ENCODE measurements at regions of chr2 and their contacts with region 1.

Region 1: DNA sequence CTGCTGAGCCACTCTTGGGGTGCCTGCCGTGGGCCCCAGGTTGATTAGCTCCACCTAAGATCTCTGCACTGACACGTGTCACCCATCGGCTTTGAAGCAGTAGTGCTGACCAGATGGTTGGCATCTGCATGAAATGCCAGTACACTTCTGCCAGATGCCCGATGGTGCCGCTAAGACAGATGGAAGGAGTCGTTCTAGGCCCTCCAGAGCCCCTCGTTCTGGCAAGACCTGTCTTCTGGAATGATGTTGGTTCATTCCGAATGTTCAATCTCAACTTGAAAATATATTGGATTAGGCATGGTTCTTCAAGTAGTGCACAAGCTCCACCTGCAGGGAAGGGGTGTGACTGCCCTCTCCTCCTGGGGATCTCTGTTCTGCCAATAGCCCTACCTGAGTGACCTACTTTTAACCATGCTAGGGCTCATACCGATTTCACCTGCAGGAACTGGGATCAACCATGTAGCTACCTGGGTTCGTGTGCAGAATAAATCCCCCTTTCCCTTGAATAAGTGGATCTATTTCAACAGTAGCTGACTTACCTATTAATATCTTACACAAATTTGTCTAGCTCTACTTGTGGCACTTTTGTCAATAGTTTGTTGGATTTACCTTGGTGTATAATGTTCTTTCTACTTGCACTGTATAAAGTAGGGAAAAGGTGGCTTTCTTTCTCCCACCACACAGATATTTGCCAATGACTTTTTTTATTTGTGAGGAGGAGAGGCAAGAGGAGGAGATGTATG is 342.6 kb downstream of the CTNNA2 start:
- DNase-seq: peak; percentile 12
- H3K4me3 ChIP-seq: no peak overlapping the region
- H3K27ac ChIP-seq: no peak overlapping the region
- H3K4me1 ChIP-seq: no peaks in the 10 kb centered on the region
- H3K27me3 ChIP-seq: peaks cover 31% of the 10 kb centered on the region
- CTCF ChIP-seq: peak; percentile 39

Region 2: GRCh38 chr2:79660557-79660956 is 194.9 kb before region 1 on chr2:
- CTCF ChIA-PET with region 1: no interaction called
- POLR2A ChIA-PET with region 1: no interaction called
- intact Hi-C with region 1: loop called (anchors 10 kb)
- DNase-seq: no peak
- H3K4me3 ChIP-seq: no peak overlapping the region
- H3K27ac ChIP-seq: no peak overlapping the region
- H3K4me1 ChIP-seq: no peaks in the 10 kb centered on the region
- H3K27me3 ChIP-seq: no peaks in the 10 kb centered on the region
- CTCF ChIP-seq: no peak